OCI-LY7 (cell line): ENCODE measurements at regions of chr6 and their contacts with region 1.

Region 1: GRCh38 chr6:88566746-88567534 is 396.5 kb downstream of the RNGTT start:
- DNase-seq: peak; percentile 75
- H3K4me3 ChIP-seq: peak overlapping the region; percentile 14
- H3K27ac ChIP-seq: peak overlapping the region; percentile 6
- H3K4me1 ChIP-seq: peaks cover 14% of the 10 kb centered on the region
- CTCF ChIP-seq: 0 out of 2 replicates have a peak, but pooled peaks have one; percentile 19

Region 2: GRCh38 chr6:88268508-88268907 is 298.4 kb before region 1 on chr6:
- CTCF ChIA-PET with region 1: interaction called, 11 read pairs
- POLR2A ChIA-PET with region 1: no interaction called
- intact Hi-C with region 1: no loop called
- DNase-seq: no peak
- H3K4me3 ChIP-seq: no peak overlapping the region
- H3K27ac ChIP-seq: no peak overlapping the region
- H3K4me1 ChIP-seq: no peaks in the 10 kb centered on the region
- CTCF ChIP-seq: no peak